Prostate gland (tissue), 2 donors: ENCODE measurements at regions of chr12 and their contacts with region 1.

Region 1: DNA sequence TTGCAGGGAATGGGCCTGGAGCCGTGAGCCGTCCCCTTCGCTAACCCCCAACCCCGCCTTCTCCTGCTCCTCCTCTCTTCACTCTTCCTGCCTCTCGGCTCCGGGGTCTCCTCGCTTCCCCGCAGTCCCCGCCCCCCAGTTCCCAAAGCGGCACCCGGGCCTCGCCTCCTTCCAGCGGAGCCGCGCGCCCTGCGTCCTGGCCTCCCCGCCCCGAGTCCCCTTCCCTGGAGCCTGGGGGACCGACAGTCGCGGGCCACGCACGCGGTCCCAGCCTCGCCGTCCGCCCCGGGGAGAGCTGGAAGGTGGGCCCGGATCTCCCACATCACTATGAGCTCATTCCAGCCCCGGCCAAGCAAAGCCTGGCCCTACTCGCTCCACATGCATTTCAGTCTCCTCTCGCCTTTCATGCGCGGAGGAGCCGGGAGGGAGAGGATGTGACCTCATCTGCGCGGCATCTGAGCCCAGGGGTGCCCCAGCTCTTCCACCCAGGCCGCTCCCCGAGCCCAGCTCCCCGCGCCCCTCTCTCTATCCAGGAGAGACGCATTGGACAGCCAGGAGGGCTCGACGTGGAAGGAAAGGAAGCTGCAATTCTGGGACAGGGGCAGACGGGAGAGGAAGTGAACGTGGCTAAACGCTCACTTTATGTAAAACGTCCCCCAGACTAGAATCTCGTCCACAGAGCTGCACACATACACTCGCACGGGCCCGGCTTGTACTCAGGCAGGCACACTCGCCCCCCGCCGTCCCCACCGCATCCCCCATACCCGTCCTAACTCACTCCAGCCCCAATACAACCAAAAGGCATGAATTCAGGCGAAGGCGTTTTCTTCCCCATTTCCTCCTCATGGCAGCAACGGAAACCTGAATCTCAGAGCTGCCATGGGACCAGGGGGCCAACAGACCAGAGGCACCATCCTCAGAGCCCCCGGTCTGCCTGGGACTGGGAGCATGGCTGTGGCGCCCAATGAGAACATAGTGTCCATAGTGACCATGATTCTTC is 108.7 kb upstream of the CCND2 start:
- DNase-seq: no peak
- H3K4me3 ChIP-seq: peak overlapping the region; percentile 2 to 21
- H3K27ac ChIP-seq: no peak overlapping the region
- H3K4me1 ChIP-seq: no peaks in the 10 kb centered on the region
- H3K27me3 ChIP-seq: no peaks in the 10 kb centered on the region
- CTCF ChIP-seq: no peak
- POLR2A ChIP-seq: no peak

Region 2: DNA sequence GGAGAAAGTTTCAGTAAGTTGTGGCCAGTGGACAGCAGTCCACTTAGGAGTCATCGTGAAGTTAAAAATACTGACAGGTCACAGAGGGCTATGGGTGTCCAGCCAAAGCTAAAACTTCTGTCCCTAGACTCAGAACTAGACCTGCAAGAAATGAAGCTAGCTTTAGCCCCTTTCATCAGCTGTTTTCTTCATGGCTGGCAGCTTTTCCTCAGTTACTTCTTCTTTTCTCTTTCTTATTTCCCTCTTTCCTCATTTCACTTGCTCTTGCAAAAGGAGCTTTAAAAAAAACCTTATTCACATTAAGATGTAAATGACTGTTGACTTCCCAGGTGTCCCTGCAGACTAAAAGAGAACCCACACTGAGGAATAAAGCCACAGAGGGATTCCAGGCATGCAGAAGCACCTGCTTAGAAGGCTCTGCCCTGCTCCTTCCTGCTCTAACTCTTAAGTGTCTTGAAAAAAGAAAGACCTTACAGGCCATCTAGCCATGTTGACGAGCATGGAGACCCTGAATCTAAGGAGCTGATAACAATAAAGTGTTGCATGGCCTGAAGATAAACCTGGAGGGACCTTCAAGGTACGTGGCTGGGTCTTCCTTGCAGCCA is 39.0 kb after region 1 on chr12:
- intact Hi-C with region 1: no loop called
- DNase-seq: no peak
- H3K4me3 ChIP-seq: no peak overlapping the region
- H3K27ac ChIP-seq: no peak overlapping the region
- H3K4me1 ChIP-seq: no peaks in the 10 kb centered on the region
- H3K27me3 ChIP-seq: no peaks in the 10 kb centered on the region
- CTCF ChIP-seq: no peak
- POLR2A ChIP-seq: no peak

Region 3: DNA sequence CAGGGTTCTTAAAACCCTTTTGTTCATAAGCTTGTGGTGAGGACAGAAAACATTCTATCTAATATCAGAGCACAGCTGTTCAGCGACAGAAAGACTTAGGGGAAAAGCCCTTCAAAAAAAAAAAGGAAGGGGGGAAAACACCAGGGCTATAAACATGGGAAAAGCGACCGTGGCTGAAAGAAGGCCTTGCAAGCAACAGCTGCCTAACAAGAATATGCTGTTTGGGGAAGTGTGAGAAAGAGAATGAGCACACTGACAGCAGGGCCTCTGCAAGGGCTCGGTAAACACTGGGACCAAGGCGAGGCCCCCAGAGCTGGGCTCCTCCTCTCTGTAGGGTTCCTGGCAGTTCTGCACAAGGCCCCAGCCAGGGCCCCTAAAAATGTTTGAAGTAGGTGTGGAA is 81.3 kb after region 1 on chr12:
- intact Hi-C with region 1: no loop called
- DNase-seq: no peak
- H3K4me3 ChIP-seq: no peak overlapping the region
- H3K27ac ChIP-seq: no peak overlapping the region
- H3K4me1 ChIP-seq: no peaks in the 10 kb centered on the region
- H3K27me3 ChIP-seq: no peaks in the 10 kb centered on the region
- CTCF ChIP-seq: no peak
- POLR2A ChIP-seq: no peak

Region 4: DNA sequence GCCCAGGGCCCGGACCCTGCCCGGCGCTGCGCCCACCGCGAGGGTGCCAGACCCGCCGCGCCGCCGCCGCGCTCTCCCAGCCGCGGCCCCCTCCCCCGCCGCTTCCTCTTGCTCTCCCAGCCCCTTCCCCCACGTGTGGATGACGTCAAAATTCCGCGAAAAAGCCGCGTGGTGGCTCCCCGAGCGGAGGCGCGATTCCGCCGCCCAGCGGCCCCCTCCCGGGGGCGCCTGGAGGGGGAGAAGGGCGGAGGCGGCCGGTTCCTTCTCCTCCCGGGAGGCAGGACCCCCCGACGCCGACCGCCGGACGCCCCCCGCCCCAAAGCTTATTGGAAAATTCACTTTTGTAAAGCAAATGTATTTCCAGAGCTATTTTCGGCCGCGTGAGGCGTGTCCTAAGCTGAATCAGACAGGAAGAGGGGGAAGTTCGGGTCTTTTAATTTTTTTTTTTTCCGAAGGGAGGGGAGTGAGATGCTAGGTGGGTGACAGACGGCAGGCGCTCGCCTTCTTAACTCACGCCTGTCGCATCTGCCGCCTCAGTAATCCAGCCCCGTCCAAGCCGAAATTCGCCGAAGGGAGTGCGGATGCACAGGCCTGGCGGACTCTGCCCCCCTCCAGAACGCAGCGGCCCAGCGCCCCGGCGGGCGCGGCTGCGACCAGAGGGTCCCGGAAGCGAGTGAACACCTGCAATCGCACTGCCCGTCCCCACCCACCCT is 104.6 kb after region 1 on chr12:
- intact Hi-C with region 1: loop called (anchors 10 kb)
- DNase-seq: no peak
- H3K4me3 ChIP-seq: peak overlapping the region; percentile 45 to 57
- H3K27ac ChIP-seq: peak overlapping the region; percentile 67 to 76
- H3K4me1 ChIP-seq: no peaks in the 10 kb centered on the region
- H3K27me3 ChIP-seq: peaks cover 4% of the 10 kb centered on the region
- CTCF ChIP-seq: peak in 2 of 4 experiments; percentile 19 to 26
- POLR2A ChIP-seq: peak; percentile 33